Heart right ventricle (tissue), 16 donors: ENCODE measurements at regions of chr13 and their contacts with region 1.

Region 1: GRCh38 chr13:43611281-43612273 is 175.2 kb downstream of the ENOX1 start:
- DNase-seq: no peak
- ATAC-seq: peak in 3 of 8 donors; percentile 7 to 39 (median 33)
- H3K4me3 ChIP-seq: no peak overlapping the region
- H3K27ac ChIP-seq: peak overlapping the region in 3 of 10 donors; percentile 15 to 40 (median 22)
- H3K4me1 ChIP-seq: peaks cover 0 to 35% (median 19%) of the 10 kb centered on the region in 9 donors
- H3K27me3 ChIP-seq: no peaks in the 10 kb centered on the region
- CTCF ChIP-seq: no peak

Region 2: DNA sequence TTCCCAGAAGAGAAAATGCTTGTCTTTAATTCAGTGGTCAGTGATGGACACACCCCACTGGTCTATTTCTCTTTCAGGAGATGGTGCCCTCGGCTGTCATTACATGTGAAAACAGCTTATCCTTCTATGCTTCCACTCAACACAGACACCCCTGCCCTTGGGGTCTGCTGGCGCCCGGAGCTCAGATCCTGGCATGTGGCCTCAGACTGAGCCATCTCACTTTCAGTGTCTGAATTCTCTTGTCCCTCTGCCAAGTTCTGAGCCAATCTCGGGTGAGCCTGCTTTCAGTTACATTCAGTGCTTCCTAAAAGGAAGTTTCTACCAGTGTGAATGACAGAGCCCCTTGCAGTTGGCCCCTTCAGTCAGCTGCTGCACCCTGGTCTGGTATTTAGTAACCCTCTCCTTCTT is 294.6 kb before region 1 on chr13:
- intact Hi-C with region 1: no loop called
- DNase-seq: peak in 1 of 2 donors; percentile 8
- ATAC-seq: peak in 7 of 8 donors; percentile 23 to 76 (median 69)
- H3K4me3 ChIP-seq: peak overlapping the region in 2 of 10 donors; percentile 2 to 8
- H3K27ac ChIP-seq: peak overlapping the region in 1 of 10 donors; percentile 4
- H3K4me1 ChIP-seq: peaks cover 0 to 13% (median 8%) of the 10 kb centered on the region in 9 donors
- H3K27me3 ChIP-seq: no peaks in the 10 kb centered on the region
- CTCF ChIP-seq: no peak

Region 3: GRCh38 chr13:43572656-43573367 is 38.8 kb before region 1 on chr13:
- intact Hi-C with region 1: loop called in 1 of 10 experiments (anchors 5 kb)
- DNase-seq: no peak
- ATAC-seq: no peak
- H3K4me3 ChIP-seq: no peak overlapping the region
- H3K27ac ChIP-seq: no peak overlapping the region
- H3K4me1 ChIP-seq: peaks cover 0 to 37% (median 21%) of the 10 kb centered on the region in 9 donors
- H3K27me3 ChIP-seq: no peaks in the 10 kb centered on the region
- CTCF ChIP-seq: no peak